Naive thymus-derived CD4-positive, alpha-beta T cell (primary cell): ENCODE measurements at regions of chr4 and their contacts with region 1.

Region 1: GRCh38 chr4:70651864-70652506 is 14.3 kb downstream of the JCHAIN start:
- DNase-seq: peak in 6 of 9 donors; percentile 12 to 47 (median 40)
- ATAC-seq: peak; percentile 61
- H3K4me3 ChIP-seq: no peak overlapping the region
- H3K4me3 Mint-ChIP-seq: no peak overlapping the region
- H3K27ac ChIP-seq: no peak overlapping the region
- H3K27ac Mint-ChIP-seq: no peak overlapping the region
- H3K4me1 ChIP-seq: no peaks in the 10 kb centered on the region
- H3K4me1 Mint-ChIP-seq: peaks cover 0 to 6% (median 0%) of the 10 kb centered on the region in 7 donors
- H3K27me3 ChIP-seq: no peaks in the 10 kb centered on the region
- H3K27me3 Mint-ChIP-seq: peaks cover 0 to 25% (median 3%) of the 10 kb centered on the region in 5 donors

Region 2: DNA sequence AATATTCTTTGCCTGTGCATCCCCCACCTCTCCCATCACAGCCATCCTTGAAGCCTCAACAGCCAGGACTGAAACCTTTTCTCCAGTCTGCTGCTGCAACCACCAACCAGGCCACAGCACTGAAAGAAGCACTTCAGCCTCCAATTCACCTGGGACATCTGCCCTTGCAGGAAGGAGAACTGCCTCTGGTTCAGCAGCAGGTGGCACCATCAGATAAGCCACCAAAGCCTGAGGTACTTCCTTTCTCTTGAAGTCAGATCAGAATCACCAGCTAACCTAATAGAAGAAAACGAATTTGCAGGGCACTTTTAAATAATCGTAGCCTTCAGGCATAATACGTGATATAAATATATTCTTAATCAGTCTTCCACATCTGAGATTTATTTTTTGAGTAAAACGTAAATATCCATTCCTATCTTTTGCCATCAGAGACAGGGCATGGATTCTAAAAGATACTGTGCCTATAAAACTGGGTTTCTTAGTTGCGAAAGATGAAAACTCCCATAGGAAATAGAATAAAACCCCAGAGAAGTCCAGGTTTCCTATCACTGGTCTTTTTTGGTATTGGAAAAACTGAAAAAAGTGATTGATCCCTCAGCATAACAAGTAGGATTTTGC is 50.5 kb before region 1 on chr4:
- CTCF ChIA-PET with region 1: no interaction called
- POLR2A ChIA-PET with region 1: no interaction called
- intact Hi-C with region 1: loop called in 1 of 2 experiments (anchors 2 kb)
- DNase-seq: peak; percentile 29 to 72 (median 61)
- ATAC-seq: peak; percentile 90
- H3K4me3 ChIP-seq: no peak overlapping the region
- H3K4me3 Mint-ChIP-seq: no peak overlapping the region
- H3K27ac ChIP-seq: no peak overlapping the region
- H3K27ac Mint-ChIP-seq: no peak overlapping the region
- H3K4me1 ChIP-seq: no peaks in the 10 kb centered on the region
- H3K4me1 Mint-ChIP-seq: peaks cover 0 to 4% (median 0%) of the 10 kb centered on the region in 7 donors
- H3K27me3 ChIP-seq: no peaks in the 10 kb centered on the region
- H3K27me3 Mint-ChIP-seq: peaks cover 0 to 20% (median 4%) of the 10 kb centered on the region in 5 donors

Region 3: GRCh38 chr4:70704331-70705145 is 52.6 kb after region 1 on chr4:
- CTCF ChIA-PET with region 1: interaction called, 7 read pairs
- POLR2A ChIA-PET with region 1: no interaction called
- intact Hi-C with region 1: loop called in 1 of 2 experiments (anchors 1 kb)
- DNase-seq: peak; percentile 30 to 63 (median 44)
- ATAC-seq: peak; percentile 67
- H3K4me3 ChIP-seq: peak overlapping the region; percentile 87
- H3K4me3 Mint-ChIP-seq: peak overlapping the region; percentile 82 to 95 (median 93)
- H3K27ac ChIP-seq: peak overlapping the region; percentile 88
- H3K27ac Mint-ChIP-seq: peak overlapping the region; percentile 74 to 98 (median 93)
- H3K4me1 ChIP-seq: peaks cover 12 to 18% of the 10 kb centered on the region in 2 donors
- H3K4me1 Mint-ChIP-seq: peaks cover 17 to 43% (median 33%) of the 10 kb centered on the region in 7 donors
- H3K27me3 ChIP-seq: no peaks in the 10 kb centered on the region
- H3K27me3 Mint-ChIP-seq: no peaks in the 10 kb centered on the region

Region 4: GRCh38 chr4:70778888-70779422 is 127.0 kb after region 1 on chr4:
- CTCF ChIA-PET with region 1: no interaction called
- POLR2A ChIA-PET with region 1: no interaction called
- intact Hi-C with region 1: no loop called
- DNase-seq: no peak
- ATAC-seq: no peak
- H3K4me3 ChIP-seq: no peak overlapping the region
- H3K4me3 Mint-ChIP-seq: no peak overlapping the region
- H3K27ac ChIP-seq: no peak overlapping the region
- H3K27ac Mint-ChIP-seq: peak overlapping the region in 1 of 9 donors; percentile 41
- H3K4me1 ChIP-seq: no peaks in the 10 kb centered on the region
- H3K4me1 Mint-ChIP-seq: peaks cover 0 to 2% (median 0%) of the 10 kb centered on the region in 7 donors
- H3K27me3 ChIP-seq: no peaks in the 10 kb centered on the region
- H3K27me3 Mint-ChIP-seq: no peaks in the 10 kb centered on the region

Region 5: GRCh38 chr4:70927502-70928137 is 275.6 kb after region 1 on chr4:
- CTCF ChIA-PET with region 1: interaction called, 4 read pairs
- POLR2A ChIA-PET with region 1: no interaction called
- intact Hi-C with region 1: loop called in 1 of 2 experiments (anchors 1 kb)
- DNase-seq: peak in 7 of 9 donors; percentile 27 to 59 (median 36)
- ATAC-seq: peak; percentile 68
- H3K4me3 ChIP-seq: no peak overlapping the region
- H3K4me3 Mint-ChIP-seq: peak overlapping the region; percentile 4 to 66 (median 54)
- H3K27ac ChIP-seq: no peak overlapping the region
- H3K27ac Mint-ChIP-seq: peak overlapping the region; percentile 16 to 85 (median 60)
- H3K4me1 ChIP-seq: peaks cover 0 to 13% of the 10 kb centered on the region in 2 donors
- H3K4me1 Mint-ChIP-seq: peaks cover 21 to 55% (median 53%) of the 10 kb centered on the region in 7 donors
- H3K27me3 ChIP-seq: no peaks in the 10 kb centered on the region
- H3K27me3 Mint-ChIP-seq: no peaks in the 10 kb centered on the region

Region 6: DNA sequence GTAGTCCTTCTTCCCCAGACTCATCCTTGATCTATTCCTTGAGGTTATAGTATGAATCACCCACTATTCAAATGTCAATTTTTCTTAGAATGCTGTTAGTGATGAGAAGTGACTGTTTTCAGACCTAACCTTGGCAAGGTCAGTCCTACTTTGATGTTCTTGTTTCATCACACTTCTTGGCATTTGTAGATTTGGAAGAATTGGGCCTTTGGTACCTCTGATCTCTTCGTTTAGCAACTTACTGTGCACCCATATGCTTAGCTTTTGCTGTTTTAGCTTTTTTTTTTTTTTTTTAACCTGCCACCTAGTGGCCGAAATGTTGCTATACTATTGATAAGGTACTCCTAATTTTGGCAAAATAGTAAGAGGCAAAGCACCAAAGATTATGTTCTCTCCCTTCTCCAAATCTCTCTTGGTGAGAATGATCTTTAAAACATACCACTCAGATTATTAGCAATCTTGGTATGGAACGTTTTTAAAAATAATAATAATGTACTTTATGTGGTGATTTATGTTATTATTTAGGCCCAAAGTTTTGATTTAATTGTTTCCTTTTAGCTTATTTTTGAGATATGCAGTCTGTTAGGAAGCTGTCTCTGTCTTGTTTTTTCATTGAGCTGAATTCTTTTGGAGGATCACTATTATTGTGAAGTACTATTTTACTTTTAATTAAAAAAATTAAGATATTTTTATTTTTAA is 358.1 kb after region 1 on chr4:
- CTCF ChIA-PET with region 1: interaction called, 10 read pairs
- POLR2A ChIA-PET with region 1: interaction called, 5 read pairs
- intact Hi-C with region 1: loop called (anchors 1 to 5 kb)
- DNase-seq: peak in 6 of 9 donors; percentile 23 to 54 (median 48)
- ATAC-seq: peak; percentile 83
- H3K4me3 ChIP-seq: no peak overlapping the region
- H3K4me3 Mint-ChIP-seq: peak overlapping the region in 3 of 10 donors; percentile 5 to 44 (median 29)
- H3K27ac ChIP-seq: no peak overlapping the region
- H3K27ac Mint-ChIP-seq: peak overlapping the region in 8 of 9 donors; percentile 26 to 65 (median 48)
- H3K4me1 ChIP-seq: peaks cover 9 to 10% of the 10 kb centered on the region in 2 donors
- H3K4me1 Mint-ChIP-seq: peaks cover 23 to 52% (median 48%) of the 10 kb centered on the region in 7 donors
- H3K27me3 ChIP-seq: no peaks in the 10 kb centered on the region
- H3K27me3 Mint-ChIP-seq: no peaks in the 10 kb centered on the region

Region 7: GRCh38 chr4:71184195-71184781 is 532.3 kb after region 1 on chr4:
- CTCF ChIA-PET with region 1: no interaction called
- POLR2A ChIA-PET with region 1: no interaction called
- intact Hi-C with region 1: loop called (anchors 1 to 5 kb)
- DNase-seq: peak in 5 of 9 donors; percentile 20 to 43 (median 32)
- ATAC-seq: peak; percentile 57
- H3K4me3 ChIP-seq: no peak overlapping the region
- H3K4me3 Mint-ChIP-seq: no peak overlapping the region
- H3K27ac ChIP-seq: no peak overlapping the region
- H3K27ac Mint-ChIP-seq: no peak overlapping the region
- H3K4me1 ChIP-seq: peaks cover 4 to 5% of the 10 kb centered on the region in 2 donors
- H3K4me1 Mint-ChIP-seq: peaks cover 13 to 30% (median 25%) of the 10 kb centered on the region in 7 donors
- H3K27me3 ChIP-seq: peaks cover 0 to 14% of the 10 kb centered on the region in 2 donors
- H3K27me3 Mint-ChIP-seq: peaks cover 35 to 53% (median 38%) of the 10 kb centered on the region in 5 donors

Region 8: DNA sequence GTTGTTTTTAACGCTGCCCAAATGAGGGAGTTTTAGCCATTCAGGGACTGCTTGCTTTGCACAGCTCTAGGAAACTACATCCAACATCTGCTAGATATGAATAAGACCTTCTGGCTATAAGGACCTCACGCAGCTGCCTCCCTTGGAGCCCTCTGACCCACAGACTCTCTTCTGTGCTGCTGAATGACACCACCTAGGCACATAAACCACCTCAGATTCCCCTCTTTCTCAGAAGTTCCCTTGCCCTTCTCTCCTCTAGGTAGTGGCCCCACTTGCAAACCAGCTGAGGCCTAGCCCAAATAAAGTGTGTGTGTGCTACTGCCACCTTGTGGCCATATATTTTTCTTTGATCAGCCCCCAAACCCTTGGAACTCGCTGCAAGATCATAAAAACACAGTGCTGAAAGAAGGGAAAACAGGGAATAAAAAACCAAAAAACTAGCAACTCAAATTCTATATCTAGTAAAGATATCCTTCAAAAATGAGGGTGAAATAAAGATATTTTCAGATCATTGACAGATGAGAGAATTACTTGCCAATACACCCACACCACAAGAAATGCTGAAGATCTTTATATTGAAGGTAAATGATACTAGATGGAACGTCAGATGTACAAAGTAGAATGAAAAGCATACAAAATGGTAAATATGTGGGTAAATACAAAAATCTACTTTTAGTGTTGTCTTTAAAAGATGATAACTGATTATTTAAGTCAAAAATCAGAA is 1651.2 kb after region 1 on chr4:
- CTCF ChIA-PET with region 1: no interaction called
- POLR2A ChIA-PET with region 1: no interaction called
- intact Hi-C with region 1: loop called in 1 of 2 experiments (anchors 1 kb)
- DNase-seq: peak in 8 of 9 donors; percentile 9 to 51 (median 32)
- ATAC-seq: peak; percentile 75
- H3K4me3 ChIP-seq: no peak overlapping the region
- H3K4me3 Mint-ChIP-seq: no peak overlapping the region
- H3K27ac ChIP-seq: no peak overlapping the region
- H3K27ac Mint-ChIP-seq: peak overlapping the region in 1 of 9 donors; percentile 0
- H3K4me1 ChIP-seq: no peaks in the 10 kb centered on the region
- H3K4me1 Mint-ChIP-seq: no peaks in the 10 kb centered on the region
- H3K27me3 ChIP-seq: no peaks in the 10 kb centered on the region
- H3K27me3 Mint-ChIP-seq: peaks cover 0 to 3% (median 0%) of the 10 kb centered on the region in 5 donors